ENCODE measurements at regions of chr10 and their contacts with region 1.

Region 1: DNA sequence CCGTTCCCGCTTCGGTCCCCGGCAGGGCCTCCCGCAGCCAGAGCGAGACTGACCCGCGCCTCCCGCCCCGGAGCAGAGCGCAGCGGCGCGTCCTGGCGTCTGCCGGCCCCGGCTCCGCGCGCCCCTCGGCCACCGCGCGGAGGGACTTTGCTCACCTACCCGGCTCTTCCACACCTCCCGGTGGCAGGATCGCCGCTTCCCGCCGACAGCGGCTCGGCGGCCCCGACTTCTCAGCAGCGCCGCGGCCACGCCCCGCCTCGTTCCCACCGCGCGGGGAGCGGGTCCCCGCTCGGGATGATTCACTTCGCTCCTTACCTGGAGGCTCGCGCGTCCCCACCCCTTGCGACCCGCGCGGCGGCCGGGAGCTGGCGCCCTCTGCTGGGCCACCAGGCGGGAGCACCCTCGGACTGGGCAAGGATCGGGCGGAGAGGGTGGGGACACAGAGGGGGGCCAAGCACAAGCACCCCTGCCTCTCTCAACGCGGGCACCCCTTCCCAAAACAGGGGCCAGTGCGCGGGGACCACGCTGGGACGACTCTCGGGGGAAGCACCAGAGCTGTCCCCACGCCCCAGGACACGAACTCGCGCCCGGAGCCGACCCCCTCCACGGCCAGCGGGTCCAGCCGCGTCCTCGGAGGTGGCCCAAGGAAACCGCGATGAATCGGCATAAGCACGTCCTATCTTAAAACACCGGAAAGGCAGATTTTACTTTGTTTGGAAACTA is 101.0 kb upstream of the SVIL start:
- DNase-seq: peak; percentile 92
- H3K4me3 ChIP-seq: peak overlapping the region; percentile 78
- H3K27ac ChIP-seq: peak overlapping the region; percentile 93
- H3K4me1 ChIP-seq: no peaks in the 10 kb centered on the region
- H3K27me3 ChIP-seq: no peaks in the 10 kb centered on the region
- CTCF ChIP-seq: peak; percentile 80

Region 2: GRCh38 chr10:29517352-29517923 is 218.3 kb before region 1 on chr10:
- intact Hi-C with region 1: loop called (anchors 5 kb)
- DNase-seq: peak; percentile 39
- H3K4me3 ChIP-seq: no peak overlapping the region
- H3K27ac ChIP-seq: no peak overlapping the region
- H3K4me1 ChIP-seq: no peaks in the 10 kb centered on the region
- H3K27me3 ChIP-seq: no peaks in the 10 kb centered on the region
- CTCF ChIP-seq: peak; percentile 51

Region 3: GRCh38 chr10:29598851-29599311 is 136.9 kb before region 1 on chr10:
- intact Hi-C with region 1: loop called (anchors 10 kb)
- DNase-seq: no peak
- H3K4me3 ChIP-seq: no peak overlapping the region
- H3K27ac ChIP-seq: no peak overlapping the region
- H3K4me1 ChIP-seq: no peaks in the 10 kb centered on the region
- H3K27me3 ChIP-seq: no peaks in the 10 kb centered on the region
- CTCF ChIP-seq: no peak